Caco-2 (cell line): ENCODE measurements at regions of chr2 and their contacts with region 1.

Region 1: DNA sequence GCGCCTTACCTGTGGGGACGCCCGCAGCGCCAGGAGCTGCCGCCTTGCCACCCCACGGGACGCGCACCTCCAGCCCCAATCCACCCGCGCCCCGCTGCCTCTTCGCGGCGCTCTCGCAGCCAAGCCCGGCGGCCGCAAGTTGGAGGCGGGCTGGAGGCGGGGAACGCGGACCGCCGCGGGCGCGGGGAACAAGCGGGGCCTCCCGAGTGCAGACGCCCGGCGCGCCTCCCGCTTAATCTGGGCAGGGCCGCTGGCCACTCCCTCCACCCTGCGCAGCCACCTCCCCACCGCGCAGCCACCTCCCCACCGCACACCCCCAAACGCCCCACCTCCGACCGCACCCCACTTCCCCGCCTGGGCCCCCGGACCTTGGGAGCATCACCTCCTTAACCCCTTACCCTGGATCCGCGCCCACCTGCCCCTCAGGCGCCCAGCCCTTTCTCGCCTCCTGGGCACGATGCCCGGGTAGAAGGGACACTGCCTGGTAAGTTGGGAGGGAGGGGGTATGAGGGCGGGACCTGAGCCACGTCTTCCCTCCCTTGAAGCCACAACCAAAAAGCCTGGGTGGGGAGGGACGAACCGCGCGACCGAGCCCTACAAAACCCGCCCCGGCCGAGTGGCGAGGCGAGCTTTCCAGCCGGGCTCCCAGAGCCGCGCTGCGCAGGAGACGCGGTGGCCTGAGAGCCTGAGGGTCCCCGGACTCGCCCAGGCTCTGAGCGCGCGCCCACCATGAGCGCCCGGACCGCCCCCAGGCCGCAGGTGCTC is at the starts of genes COL4A3 and COL4A4:
- DNase-seq: peak in 1 of 2 experiments; percentile 70
- H3K4me3 ChIP-seq: peak within 1 kb of the TSS; percentile 62
- H3K4me3 Mint-ChIP-seq: peak within 1 kb of the TSS; percentile 76
- H3K27ac Mint-ChIP-seq: no peak within 1 kb of the TSS
- H3K4me1 ChIP-seq: no peaks in the 10 kb centered on the region
- H3K4me1 Mint-ChIP-seq: no peaks in the 10 kb centered on the region
- H3K27me3 ChIP-seq: no peaks in the 10 kb centered on the region
- H3K27me3 Mint-ChIP-seq: peaks cover 4% of the 10 kb centered on the region
- CTCF ChIP-seq: no peak
- total RNA-seq, gene COL4A3: 4.2 and 4.7 TPM in 2 replicates
- total RNA-seq, gene COL4A4: 8.7 and 9.5 TPM in 2 replicates

Region 2: DNA sequence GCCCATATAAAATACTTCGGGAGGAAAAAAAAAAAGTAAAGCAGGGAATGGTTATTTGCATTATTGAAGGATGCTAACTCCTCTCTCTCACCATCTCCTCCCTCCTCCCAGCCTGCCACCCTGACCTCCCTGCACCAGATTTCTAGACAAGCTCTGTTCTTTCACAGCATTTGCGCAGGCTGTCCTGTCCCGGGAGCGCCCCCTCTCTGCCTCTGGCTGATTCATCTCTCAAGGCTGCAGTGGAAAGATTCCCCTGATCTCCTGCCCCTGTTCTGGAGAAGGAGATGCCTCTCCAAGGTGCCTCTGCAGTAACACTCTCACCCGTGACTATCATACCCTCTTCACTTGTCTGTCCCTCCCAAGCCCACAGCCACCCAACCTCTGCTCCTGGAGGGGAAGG is 38.7 kb before region 1 on chr2:
- CTCF ChIA-PET with region 1: no interaction called
- POLR2A ChIA-PET with region 1: no interaction called
- intact Hi-C with region 1: no loop called
- DNase-seq: peak; percentile 25 to 41
- H3K4me3 ChIP-seq: no peak overlapping the region
- H3K4me3 Mint-ChIP-seq: no peak overlapping the region
- H3K27ac Mint-ChIP-seq: peak overlapping the region; percentile 62
- H3K4me1 ChIP-seq: peaks cover 15% of the 10 kb centered on the region
- H3K4me1 Mint-ChIP-seq: peaks cover 29% of the 10 kb centered on the region
- H3K27me3 ChIP-seq: no peaks in the 10 kb centered on the region
- H3K27me3 Mint-ChIP-seq: no peaks in the 10 kb centered on the region
- CTCF ChIP-seq: peak in 1 of 2 experiments; percentile 8

Region 3: GRCh38 chr2:227183657-227184367 is 19.6 kb after region 1 on chr2:
- CTCF ChIA-PET with region 1: no interaction called
- POLR2A ChIA-PET with region 1: no interaction called
- intact Hi-C with region 1: loop called (anchors 1 kb)
- DNase-seq: no peak
- H3K4me3 ChIP-seq: no peak overlapping the region
- H3K4me3 Mint-ChIP-seq: no peak overlapping the region
- H3K27ac Mint-ChIP-seq: no peak overlapping the region
- H3K4me1 ChIP-seq: no peaks in the 10 kb centered on the region
- H3K4me1 Mint-ChIP-seq: peaks cover 11% of the 10 kb centered on the region
- H3K27me3 ChIP-seq: no peaks in the 10 kb centered on the region
- H3K27me3 Mint-ChIP-seq: no peaks in the 10 kb centered on the region
- CTCF ChIP-seq: no peak